CD4-positive, alpha-beta memory T cell (primary cell): ENCODE measurements at regions of chr19 and their contacts with region 1.

Region 1: GRCh38 chr19:14006243-14006765 is at the start of gene RFX1:
- DNase-seq: peak; percentile 100
- H3K4me3 ChIP-seq: peak within 1 kb of the TSS; percentile 58 to 82
- H3K4me3 Mint-ChIP-seq: peak within 1 kb of the TSS; percentile 91 to 98 (median 96)
- H3K27ac ChIP-seq: peak within 1 kb of the TSS; percentile 99
- H3K27ac Mint-ChIP-seq: peak within 1 kb of the TSS; percentile 97 to 100 (median 100)
- H3K4me1 ChIP-seq: peaks cover 47% of the 10 kb centered on the region
- H3K4me1 Mint-ChIP-seq: peaks cover 29 to 51% (median 39%) of the 10 kb centered on the region in 4 donors
- H3K27me3 ChIP-seq: no peaks in the 10 kb centered on the region
- H3K27me3 Mint-ChIP-seq: peaks cover 0 to 2% of the 10 kb centered on the region in 2 donors
- total RNA-seq, gene RFX1: 17.4 to 17.8 TPM

Region 2: GRCh38 chr19:13905938-13906904 is 100.1 kb before region 1 on chr19 and contains the starts of genes BRME1 and CC2D1A:
- CTCF ChIA-PET with region 1: no interaction called
- POLR2A ChIA-PET with region 1: interaction called, 7 read pairs
- intact Hi-C with region 1: loop called (anchors 1 kb)
- DNase-seq: peak; percentile 91 to 92 (median 92)
- H3K4me3 ChIP-seq: peak within 1 kb of the TSS; percentile 34 to 79
- H3K4me3 Mint-ChIP-seq: peak within 1 kb of the TSS; percentile 82 to 93 (median 88)
- H3K27ac ChIP-seq: peak within 1 kb of the TSS; percentile 77
- H3K27ac Mint-ChIP-seq: peak within 1 kb of the TSS; percentile 73 to 98 (median 94)
- H3K4me1 ChIP-seq: peaks cover 15% of the 10 kb centered on the region
- H3K4me1 Mint-ChIP-seq: peaks cover 10 to 21% (median 13%) of the 10 kb centered on the region in 4 donors
- H3K27me3 ChIP-seq: no peaks in the 10 kb centered on the region
- H3K27me3 Mint-ChIP-seq: no peaks in the 10 kb centered on the region
- total RNA-seq, gene BRME1: 3.1 to 3.8 TPM
- total RNA-seq, gene CC2D1A: 32.9 to 37.1 TPM

Region 3: DNA sequence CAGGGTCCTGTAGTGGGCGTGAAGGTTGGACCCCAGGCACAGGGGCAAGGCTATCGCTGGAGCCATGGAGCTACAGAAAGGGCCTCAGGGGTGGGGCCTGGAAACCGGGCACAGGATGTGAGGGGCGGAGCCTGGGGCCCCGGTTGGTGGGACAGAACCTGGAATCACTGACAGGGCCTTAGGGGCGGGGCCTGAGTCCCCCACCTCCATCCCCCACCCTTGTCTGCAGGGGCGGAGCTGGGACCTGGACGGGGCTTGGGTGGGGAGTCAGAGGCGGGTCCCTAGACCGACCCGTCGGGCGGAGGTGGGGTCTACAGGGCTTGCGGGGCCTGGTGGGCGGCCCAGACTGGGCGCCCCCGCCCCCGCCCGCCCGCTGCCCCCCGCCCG is 28.0 kb before region 1 on chr19:
- CTCF ChIA-PET with region 1: no interaction called
- POLR2A ChIA-PET with region 1: interaction called, 22 read pairs
- intact Hi-C with region 1: no loop called
- DNase-seq: no peak
- H3K4me3 ChIP-seq: no peak overlapping the region
- H3K4me3 Mint-ChIP-seq: peak overlapping the region in 1 of 8 donors; percentile 50
- H3K27ac ChIP-seq: no peak overlapping the region
- H3K27ac Mint-ChIP-seq: no peak overlapping the region
- H3K4me1 ChIP-seq: peaks cover 26% of the 10 kb centered on the region
- H3K4me1 Mint-ChIP-seq: peaks cover 11 to 50% (median 24%) of the 10 kb centered on the region in 4 donors
- H3K27me3 ChIP-seq: no peaks in the 10 kb centered on the region
- H3K27me3 Mint-ChIP-seq: no peaks in the 10 kb centered on the region

Region 4: DNA sequence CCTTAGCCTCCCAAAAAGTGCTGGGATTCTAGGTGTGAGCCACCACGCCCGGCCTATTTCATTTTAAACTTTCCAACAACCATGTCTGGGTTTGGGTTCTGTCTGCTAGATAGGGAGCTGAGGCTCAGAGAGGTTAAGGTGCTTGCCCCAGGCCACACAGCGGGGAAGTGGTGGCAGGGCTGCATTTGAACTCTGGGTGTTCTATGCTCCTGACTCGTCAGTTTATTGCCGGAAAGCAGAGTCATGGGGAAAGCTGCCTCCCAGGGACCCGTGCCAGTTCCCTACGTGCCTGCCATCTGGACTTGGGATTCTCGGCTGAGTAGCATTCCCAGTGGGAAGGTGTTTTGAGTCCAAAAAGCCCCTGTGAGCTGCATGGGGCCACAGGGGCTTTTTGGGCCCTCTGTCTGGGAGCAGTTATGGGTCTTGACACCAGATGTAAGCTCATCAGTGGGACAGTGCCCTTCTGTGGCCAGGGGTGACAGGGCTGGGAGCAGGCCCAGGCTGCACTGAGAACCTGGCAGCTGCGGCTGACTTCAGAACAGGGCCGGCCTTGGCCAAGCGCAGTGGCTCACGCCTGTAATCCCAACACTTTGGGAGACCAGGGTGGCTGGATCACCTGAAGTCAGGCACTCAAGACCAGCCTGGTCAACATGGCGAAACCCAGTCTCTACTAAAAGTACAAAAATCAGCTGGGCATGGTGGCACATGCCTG is 11.1 kb before region 1 on chr19:
- CTCF ChIA-PET with region 1: interaction called, 43 read pairs
- POLR2A ChIA-PET with region 1: interaction called, 200 read pairs
- intact Hi-C with region 1: no loop called
- DNase-seq: no peak
- H3K4me3 ChIP-seq: no peak overlapping the region
- H3K4me3 Mint-ChIP-seq: no peak overlapping the region
- H3K27ac ChIP-seq: no peak overlapping the region
- H3K27ac Mint-ChIP-seq: peak overlapping the region in 1 of 7 donors; percentile 29
- H3K4me1 ChIP-seq: peaks cover 5% of the 10 kb centered on the region
- H3K4me1 Mint-ChIP-seq: peaks cover 2 to 27% (median 16%) of the 10 kb centered on the region in 4 donors
- H3K27me3 ChIP-seq: no peaks in the 10 kb centered on the region
- H3K27me3 Mint-ChIP-seq: no peaks in the 10 kb centered on the region

Region 5: DNA sequence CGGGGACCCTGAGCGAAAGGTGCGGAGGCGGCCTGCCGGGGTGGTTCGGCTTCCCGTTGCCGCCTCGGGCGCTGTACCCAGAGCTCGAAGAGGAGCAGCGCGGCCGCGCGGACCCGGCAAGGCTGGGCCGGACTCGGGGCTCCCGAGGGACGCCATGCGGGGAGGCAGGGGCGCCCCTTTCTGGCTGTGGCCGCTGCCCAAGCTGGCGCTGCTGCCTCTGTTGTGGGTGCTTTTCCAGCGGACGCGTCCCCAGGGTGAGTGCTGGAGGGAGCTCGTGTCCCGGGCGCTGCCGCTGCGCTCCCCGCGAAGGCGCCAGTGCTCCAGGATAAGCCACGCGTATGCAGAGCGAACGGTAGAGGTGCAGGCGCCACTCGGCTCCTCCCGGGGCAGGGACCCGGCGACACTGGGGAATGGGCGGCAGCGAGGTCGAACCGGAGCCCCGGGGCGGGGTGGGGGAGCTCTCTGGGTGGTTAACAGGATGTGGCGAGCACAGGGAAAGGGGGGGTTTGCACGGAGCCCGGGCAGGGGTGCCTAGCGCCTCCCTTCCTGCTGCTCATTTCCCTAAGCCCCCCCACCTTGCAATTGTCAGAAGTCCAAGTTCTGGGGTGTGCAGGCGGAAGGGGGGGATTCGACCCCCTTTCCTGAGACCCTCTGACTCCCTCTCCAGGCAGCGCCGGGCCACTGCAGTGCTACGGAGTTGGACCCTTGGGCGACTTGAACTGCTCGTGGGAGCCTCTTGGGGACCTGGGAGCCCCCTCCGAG is 25.6 kb after region 1 on chr19 and contains the start of gene IL27RA:
- CTCF ChIA-PET with region 1: interaction called, 5 read pairs
- POLR2A ChIA-PET with region 1: interaction called, 225 read pairs
- intact Hi-C with region 1: loop called (anchors 1 kb)
- DNase-seq: peak; percentile 84 to 88 (median 87)
- H3K4me3 ChIP-seq: peak within 1 kb of the TSS; percentile 70 to 97
- H3K4me3 Mint-ChIP-seq: peak within 1 kb of the TSS; percentile 89 to 97 (median 94)
- H3K27ac ChIP-seq: peak within 1 kb of the TSS; percentile 96
- H3K27ac Mint-ChIP-seq: peak within 1 kb of the TSS; percentile 93 to 99 (median 98)
- H3K4me1 ChIP-seq: peaks cover 30% of the 10 kb centered on the region
- H3K4me1 Mint-ChIP-seq: peaks cover 23 to 56% (median 37%) of the 10 kb centered on the region in 4 donors
- H3K27me3 ChIP-seq: no peaks in the 10 kb centered on the region
- H3K27me3 Mint-ChIP-seq: no peaks in the 10 kb centered on the region
- total RNA-seq, gene IL27RA: 74.3 to 76.2 TPM

Region 6: GRCh38 chr19:14073261-14073924 is 67.1 kb after region 1 on chr19:
- CTCF ChIA-PET with region 1: interaction called, 4 read pairs
- POLR2A ChIA-PET with region 1: interaction called, 11 read pairs
- intact Hi-C with region 1: no loop called
- DNase-seq: peak; percentile 80 to 88 (median 84)
- H3K4me3 ChIP-seq: peak overlapping the region; percentile 70 to 90
- H3K4me3 Mint-ChIP-seq: peak overlapping the region; percentile 89 to 98 (median 93)
- H3K27ac ChIP-seq: peak overlapping the region; percentile 61
- H3K27ac Mint-ChIP-seq: peak overlapping the region; percentile 70 to 97 (median 88)
- H3K4me1 ChIP-seq: peaks cover 31% of the 10 kb centered on the region
- H3K4me1 Mint-ChIP-seq: peaks cover 7 to 28% (median 15%) of the 10 kb centered on the region in 4 donors
- H3K27me3 ChIP-seq: no peaks in the 10 kb centered on the region
- H3K27me3 Mint-ChIP-seq: no peaks in the 10 kb centered on the region